ENCODE measurements at regions of chr15 and their contacts with region 1.

Region 1: DNA sequence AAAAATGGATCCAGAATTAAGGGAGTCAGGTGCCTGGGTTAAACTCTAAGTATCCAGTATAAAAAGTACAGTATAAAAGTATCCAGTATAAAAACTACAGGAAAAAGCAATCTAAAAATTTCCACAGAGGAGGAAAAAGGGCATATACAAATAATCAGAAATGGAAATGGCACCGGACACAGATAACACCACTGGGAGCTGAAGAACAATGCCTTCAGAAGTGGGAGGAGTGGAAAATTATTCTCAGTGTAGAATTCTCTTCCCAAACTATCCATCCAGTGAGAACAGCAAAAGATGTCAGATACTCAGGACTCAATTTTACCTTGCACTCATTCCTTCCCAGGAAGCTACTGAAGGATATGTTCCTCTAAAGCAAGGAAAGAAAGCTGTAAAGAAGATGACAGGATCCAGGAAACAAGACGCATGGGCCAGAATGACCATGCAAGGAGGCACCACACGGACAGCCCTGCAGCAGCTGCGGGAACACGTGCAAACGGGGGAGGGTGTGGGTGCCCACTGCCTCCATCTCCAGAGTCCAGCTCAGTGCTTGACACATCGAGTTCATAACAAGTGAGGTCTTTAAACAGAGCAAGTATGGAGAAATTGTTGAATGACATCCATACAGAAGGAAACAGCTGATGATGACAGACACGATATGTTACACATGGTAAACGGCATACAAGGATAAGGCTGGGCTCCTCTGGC is 68.5 kb downstream of the CHSY1 start:
- DNase-seq: no peak
- H3K4me3 Mint-ChIP-seq: no peak overlapping the region
- H3K27ac Mint-ChIP-seq: peak overlapping the region; percentile 69
- H3K4me1 Mint-ChIP-seq: peaks cover 69% of the 10 kb centered on the region
- H3K27me3 Mint-ChIP-seq: no peaks in the 10 kb centered on the region

Region 2: DNA sequence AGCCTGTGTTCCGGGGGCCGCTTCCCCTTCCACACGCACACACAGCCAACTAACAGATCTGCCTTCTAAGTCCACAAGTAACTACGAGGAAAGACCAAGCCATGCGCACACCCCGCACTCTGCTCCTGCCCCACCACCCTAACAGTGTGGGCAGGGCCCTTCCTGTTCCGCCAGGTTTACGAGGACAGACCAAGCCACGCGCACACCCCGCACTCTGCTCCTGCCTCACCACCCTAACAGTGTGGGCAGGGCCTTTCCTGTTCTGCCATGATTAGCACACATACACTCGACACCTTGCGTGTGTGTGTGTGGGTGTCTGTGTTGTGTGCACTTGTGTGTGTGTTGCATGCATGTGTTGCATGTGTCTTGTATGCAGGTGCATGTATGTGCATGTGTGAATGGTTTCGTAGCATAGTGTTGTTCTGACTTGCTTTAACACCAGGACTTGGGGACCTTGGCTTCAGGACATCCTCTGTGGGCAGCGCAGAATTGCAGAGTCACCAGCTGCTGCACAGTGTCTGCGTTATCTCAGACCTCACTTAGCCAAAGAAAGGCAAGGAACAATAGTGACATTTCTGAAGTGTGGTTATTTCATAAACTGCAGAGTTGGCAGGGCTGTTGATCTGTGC is 46.0 kb before region 1 on chr15:
- intact Hi-C with region 1: loop called (anchors 1 kb)
- DNase-seq: peak; percentile 72
- H3K4me3 Mint-ChIP-seq: peak overlapping the region; percentile 24
- H3K27ac Mint-ChIP-seq: peak overlapping the region; percentile 62
- H3K4me1 Mint-ChIP-seq: peaks cover 41% of the 10 kb centered on the region
- H3K27me3 Mint-ChIP-seq: no peaks in the 10 kb centered on the region

Region 3: DNA sequence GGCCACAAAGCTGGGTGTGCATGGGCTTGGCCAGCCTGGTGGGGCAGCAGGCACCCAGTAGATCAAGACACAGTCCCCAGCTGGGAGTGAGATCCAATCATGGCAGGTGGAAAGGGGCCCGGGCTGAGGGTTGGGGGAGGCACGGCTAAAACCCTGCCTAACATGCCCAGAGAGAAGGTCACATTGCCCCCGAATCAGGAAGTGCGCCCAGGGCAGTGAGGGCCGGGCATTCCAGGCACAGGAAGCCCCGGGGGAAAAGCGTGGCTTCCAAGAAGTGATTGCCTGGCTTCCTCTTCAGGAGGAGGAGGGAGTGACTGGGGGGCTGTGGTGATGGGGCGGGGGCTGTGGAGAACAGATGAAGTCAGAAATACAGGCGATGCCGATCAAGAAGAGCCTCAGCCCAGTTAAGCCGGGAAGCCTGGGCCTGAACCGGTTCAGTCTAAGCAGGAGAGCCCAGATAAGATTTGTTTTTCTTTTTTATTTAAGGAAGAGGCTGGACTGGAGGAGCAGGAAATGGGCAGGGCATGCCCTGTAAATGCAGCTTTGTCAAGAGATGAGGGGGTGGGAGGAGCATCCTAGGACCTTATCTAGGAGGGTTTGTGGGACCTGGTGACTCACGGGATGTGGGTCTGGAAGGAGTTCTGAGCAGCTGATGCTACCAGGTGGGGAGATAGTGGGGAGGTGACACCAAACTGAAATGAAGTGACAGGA is 15.5 kb before region 1 on chr15:
- intact Hi-C with region 1: loop called (anchors 2 kb)
- DNase-seq: peak; percentile 93
- H3K4me3 Mint-ChIP-seq: peak overlapping the region; percentile 80
- H3K27ac Mint-ChIP-seq: peak overlapping the region; percentile 96
- H3K4me1 Mint-ChIP-seq: peaks cover 43% of the 10 kb centered on the region
- H3K27me3 Mint-ChIP-seq: no peaks in the 10 kb centered on the region

Region 4: DNA sequence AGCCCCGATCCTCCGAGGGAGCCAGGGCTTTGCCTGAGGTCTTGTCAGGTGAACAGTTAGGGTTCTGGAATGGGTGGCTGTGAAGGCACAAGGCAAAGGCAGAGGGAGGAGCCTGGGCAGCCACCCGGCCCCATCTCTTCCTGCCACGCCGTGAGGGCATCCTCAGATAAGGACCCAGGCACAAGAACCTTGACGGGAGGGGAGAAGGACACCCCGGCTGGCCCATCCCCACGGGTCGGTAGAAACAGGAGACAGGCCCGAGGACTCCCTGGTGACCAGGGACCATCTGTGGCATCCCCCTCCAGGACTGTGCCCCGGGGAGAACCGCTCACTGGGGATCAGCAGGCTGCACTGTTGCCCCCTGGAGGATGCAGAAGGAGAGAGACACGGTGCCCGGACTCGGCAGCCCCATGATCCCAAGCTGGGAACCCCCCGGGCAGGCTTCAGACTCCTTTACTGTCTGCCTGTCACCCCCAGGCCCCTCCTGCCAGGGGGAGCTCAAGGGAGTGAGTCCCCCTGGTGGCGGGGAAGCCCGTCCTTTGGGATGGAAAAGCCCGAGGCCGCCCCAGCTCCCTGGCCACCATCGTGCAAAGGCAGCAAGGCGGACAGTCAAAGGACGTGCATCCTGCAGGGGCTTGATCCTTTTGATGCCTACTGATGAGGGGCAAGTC is 318.5 kb after region 1 on chr15:
- intact Hi-C with region 1: no loop called
- DNase-seq: peak; percentile 84
- H3K4me3 Mint-ChIP-seq: peak overlapping the region; percentile 75
- H3K27ac Mint-ChIP-seq: peak overlapping the region; percentile 42
- H3K4me1 Mint-ChIP-seq: peaks cover 28% of the 10 kb centered on the region
- H3K27me3 Mint-ChIP-seq: peaks cover 9% of the 10 kb centered on the region

Measured in activated CD4-positive, alpha-beta T cell treated with anti-CD3 and anti-CD28 coated beads, Interleukin-2, amount 10 ng/mL, durations not matched to agents 24 days and 14 days (primary cell).